ENCODE measurements at regions of chr18 and their contacts with region 1.

Region 1: GRCh38 chr18:63016270-63016669 is 300.9 kb downstream of the PHLPP1 start:
- DNase-seq: peak; percentile 56
- H3K4me3 Mint-ChIP-seq: no peak overlapping the region
- H3K27ac Mint-ChIP-seq: no peak overlapping the region
- H3K4me1 Mint-ChIP-seq: no peaks in the 10 kb centered on the region
- H3K27me3 Mint-ChIP-seq: no peaks in the 10 kb centered on the region
- CTCF ChIP-seq: peak; percentile 86

Region 2: GRCh38 chr18:63074981-63075404 is 58.7 kb after region 1 on chr18:
- CTCF ChIA-PET with region 1: interaction called, 3 read pairs
- intact Hi-C with region 1: loop called (anchors 1 kb)
- DNase-seq: peak; percentile 82
- H3K4me3 Mint-ChIP-seq: peak overlapping the region; percentile 78
- H3K27ac Mint-ChIP-seq: peak overlapping the region; percentile 92
- H3K4me1 Mint-ChIP-seq: peaks cover 9% of the 10 kb centered on the region
- H3K27me3 Mint-ChIP-seq: no peaks in the 10 kb centered on the region
- CTCF ChIP-seq: no peak

Region 3: DNA sequence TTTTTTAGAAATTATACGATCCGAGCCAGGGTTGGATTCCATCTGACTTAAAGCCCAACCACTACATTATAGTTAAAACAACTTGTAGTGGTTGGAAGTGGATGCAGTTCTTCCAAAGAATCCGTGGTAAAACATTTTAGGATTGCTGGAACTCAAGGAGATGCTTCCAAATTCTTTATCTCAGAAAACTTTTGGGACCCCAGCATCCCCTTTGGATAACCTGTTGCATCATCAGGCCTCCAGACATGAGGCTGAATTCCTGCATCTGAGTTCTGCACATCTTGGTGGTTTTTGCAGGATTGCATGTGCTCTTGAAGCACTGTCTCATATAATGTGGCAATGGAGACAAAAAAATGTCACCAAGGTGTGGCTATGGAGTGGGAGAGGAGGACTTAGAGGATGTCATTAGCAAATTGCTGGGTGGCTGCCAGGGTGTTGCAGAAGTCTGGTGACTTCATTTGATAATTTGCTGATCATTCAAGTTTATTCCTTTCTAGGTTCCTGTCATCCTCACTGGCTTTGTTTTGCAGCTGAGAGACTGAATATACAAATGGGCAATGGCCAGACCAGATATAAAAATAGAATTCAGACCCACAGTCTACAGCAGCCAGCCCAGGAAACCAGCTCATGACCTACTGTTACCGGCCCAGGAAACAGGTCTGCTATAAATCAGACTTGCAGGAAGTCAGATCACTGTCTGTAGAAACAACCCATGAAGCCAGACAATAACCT is 95.6 kb after region 1 on chr18:
- CTCF ChIA-PET with region 1: no interaction called
- intact Hi-C with region 1: loop called (anchors 5 kb)
- DNase-seq: peak; percentile 25
- H3K4me3 Mint-ChIP-seq: no peak overlapping the region
- H3K27ac Mint-ChIP-seq: no peak overlapping the region
- H3K4me1 Mint-ChIP-seq: peaks cover 14% of the 10 kb centered on the region
- H3K27me3 Mint-ChIP-seq: peaks cover 13% of the 10 kb centered on the region
- CTCF ChIP-seq: no peak

Region 4: DNA sequence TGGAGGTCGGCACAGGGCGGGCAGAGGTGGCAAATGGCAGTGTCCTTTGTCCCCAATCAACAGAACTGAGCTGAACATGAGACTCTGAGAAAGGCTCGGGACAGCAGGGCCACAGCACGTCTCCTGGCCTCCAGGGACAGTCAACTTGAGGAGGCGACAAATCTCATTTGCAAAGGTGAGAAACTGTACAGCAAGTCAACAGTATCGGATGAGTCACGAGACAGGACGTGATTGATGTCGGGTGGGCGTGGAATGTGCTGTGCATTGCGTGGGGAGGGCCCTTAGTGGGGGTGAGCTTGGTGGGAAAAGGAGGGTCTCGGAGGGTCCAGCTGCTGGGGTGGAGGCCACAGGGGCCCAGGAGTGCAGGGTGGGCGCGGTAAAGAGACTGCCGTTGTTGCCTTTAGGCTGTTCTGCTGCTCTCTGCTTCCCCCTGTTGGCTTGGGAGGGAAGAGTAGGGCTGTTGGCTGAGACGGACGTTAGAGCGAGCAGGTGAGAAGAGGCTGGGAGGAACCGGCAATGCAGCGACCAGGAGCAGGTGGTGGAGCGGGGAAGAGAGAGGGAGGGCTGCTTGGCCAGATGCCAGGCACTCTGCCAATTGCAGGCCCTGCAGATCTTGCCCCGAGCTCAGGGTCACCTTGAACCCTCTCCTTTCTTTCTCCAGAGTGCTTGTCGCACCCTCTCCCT is 139.0 kb after region 1 on chr18:
- CTCF ChIA-PET with region 1: no interaction called
- intact Hi-C with region 1: loop called (anchors 5 kb)
- DNase-seq: peak; percentile 84
- H3K4me3 Mint-ChIP-seq: peak overlapping the region; percentile 72
- H3K27ac Mint-ChIP-seq: peak overlapping the region; percentile 55
- H3K4me1 Mint-ChIP-seq: peaks cover 12% of the 10 kb centered on the region
- H3K27me3 Mint-ChIP-seq: peaks cover 46% of the 10 kb centered on the region
- CTCF ChIP-seq: peak; percentile 90

Region 5: DNA sequence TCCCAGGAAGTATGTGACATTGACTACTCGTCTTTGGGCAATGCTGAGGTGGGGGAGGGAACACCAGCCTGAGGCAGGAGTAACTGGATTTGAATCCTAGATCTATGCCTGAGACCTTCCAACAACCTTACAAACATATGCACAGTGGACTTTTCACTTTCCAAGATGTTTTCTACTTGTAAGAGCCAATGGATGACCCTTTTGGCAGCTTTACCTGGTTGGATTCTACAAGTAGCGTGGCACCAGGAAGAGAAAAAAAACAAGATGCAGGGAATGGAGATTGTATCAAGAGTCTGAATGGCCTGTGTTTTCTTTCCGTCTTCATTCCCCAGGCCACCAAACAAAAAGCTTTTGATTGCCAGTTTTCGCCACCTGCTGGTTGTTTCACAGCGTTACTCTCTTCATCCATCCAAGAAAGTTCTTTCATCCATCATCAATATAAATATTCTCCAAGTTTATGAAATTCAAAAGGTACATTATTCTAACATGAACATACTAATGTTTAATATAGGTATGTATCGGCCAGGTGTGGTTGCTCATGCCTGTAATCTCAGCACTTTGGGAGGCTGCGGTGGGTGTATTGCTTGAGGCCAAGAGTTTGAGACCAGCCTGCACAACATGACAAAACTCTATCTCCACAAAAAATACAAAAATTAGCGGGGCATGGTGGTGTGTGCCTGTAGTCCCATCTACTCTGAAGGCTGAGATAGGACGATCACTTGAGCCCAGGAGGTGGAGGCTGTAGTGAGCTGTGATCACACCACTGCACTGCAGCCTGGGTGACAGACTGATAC is 306.8 kb after region 1 on chr18:
- CTCF ChIA-PET with region 1: interaction called, 14 read pairs
- intact Hi-C with region 1: loop called (anchors 1 kb)
- DNase-seq: peak; percentile 60
- H3K4me3 Mint-ChIP-seq: no peak overlapping the region
- H3K27ac Mint-ChIP-seq: peak overlapping the region; percentile 38
- H3K4me1 Mint-ChIP-seq: peaks cover 24% of the 10 kb centered on the region
- H3K27me3 Mint-ChIP-seq: peaks cover 16% of the 10 kb centered on the region
- CTCF ChIP-seq: peak; percentile 69